ENCODE measurements at regions of chr11 and their contacts with region 1.

Region 1: DNA sequence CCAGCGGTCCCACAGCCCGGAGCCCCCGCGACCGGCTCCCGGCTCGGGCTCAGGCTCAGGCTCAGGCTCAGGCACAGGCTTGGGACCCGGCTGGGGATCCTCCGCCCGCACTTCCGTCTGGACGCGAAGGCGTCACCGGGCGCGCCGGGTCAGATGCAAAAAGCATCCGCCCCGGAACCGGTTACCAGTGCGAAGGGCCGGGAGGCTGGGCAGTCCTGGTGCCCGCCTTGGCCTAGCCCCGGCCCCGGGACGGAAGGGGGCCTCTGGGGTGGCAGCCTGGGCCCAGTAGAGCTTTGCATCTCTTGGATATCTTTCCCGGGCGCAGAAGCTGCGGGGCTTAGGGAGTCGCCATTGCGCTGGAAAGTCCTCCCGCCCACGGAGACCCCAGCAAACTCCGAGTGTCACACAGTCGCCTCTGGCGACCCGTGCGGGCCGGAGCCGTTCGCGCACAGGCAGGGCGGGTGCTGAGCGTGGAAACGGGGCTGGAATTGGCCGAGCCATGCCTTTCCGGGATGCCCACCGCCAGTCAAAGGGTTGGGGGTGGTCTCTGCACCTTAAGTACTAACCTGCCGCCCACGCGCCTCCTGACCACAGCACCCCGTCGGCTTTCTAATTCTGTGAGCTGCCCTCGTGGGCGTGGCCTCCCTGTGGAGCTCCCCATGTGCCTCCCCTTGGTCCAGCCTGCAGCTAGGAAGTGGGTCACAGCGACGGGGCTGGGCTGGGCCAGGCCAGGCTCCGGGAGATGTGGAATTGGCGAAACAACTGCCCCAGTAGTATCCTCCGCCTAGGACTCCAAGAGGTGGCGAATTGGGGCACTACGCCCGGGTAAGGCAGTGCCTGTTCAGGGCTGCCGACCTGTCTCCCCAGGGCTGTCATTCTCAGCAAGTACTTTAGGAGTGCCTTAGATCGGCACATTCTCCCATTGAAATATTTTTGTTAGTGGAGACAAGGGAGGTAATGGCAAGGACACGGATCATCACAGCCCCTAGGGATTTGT is at the start of gene TMEM9B:
- DNase-seq: peak; percentile 48 to 89 (median 75)
- ATAC-seq: peak; percentile 72
- H3K4me3 ChIP-seq: peak within 1 kb of the TSS; percentile 93 to 98
- H3K4me3 Mint-ChIP-seq: peak within 1 kb of the TSS; percentile 98
- H3K27ac ChIP-seq: peak within 1 kb of the TSS; percentile 94 to 99
- H3K27ac Mint-ChIP-seq: peak within 1 kb of the TSS; percentile 98
- H3K4me1 ChIP-seq: peaks cover 24% of the 10 kb centered on the region
- H3K4me1 Mint-ChIP-seq: peaks cover 36% of the 10 kb centered on the region
- H3K27me3 ChIP-seq: no peaks in the 10 kb centered on the region
- H3K27me3 Mint-ChIP-seq: no peaks in the 10 kb centered on the region
- CTCF ChIP-seq: no peak
- total RNA-seq, gene TMEM9B: 27.5 to 28.5 TPM

Region 2: GRCh38 chr11:8225589-8226036 is 739.0 kb before region 1 on chr11:
- CTCF ChIA-PET with region 1: no interaction called
- POLR2A ChIA-PET with region 1: no interaction called
- intact Hi-C with region 1: loop called in 1 of 2 experiments (anchors 5 kb)
- DNase-seq: peak; percentile 28 to 77 (median 66)
- ATAC-seq: peak; percentile 44
- H3K4me3 ChIP-seq: no peak overlapping the region
- H3K4me3 Mint-ChIP-seq: no peak overlapping the region
- H3K27ac ChIP-seq: no peak overlapping the region
- H3K27ac Mint-ChIP-seq: no peak overlapping the region
- H3K4me1 ChIP-seq: no peaks in the 10 kb centered on the region
- H3K4me1 Mint-ChIP-seq: peaks cover 2% of the 10 kb centered on the region
- H3K27me3 ChIP-seq: no peaks in the 10 kb centered on the region
- H3K27me3 Mint-ChIP-seq: peaks cover 5% of the 10 kb centered on the region
- CTCF ChIP-seq: peak; percentile 76

Region 3: DNA sequence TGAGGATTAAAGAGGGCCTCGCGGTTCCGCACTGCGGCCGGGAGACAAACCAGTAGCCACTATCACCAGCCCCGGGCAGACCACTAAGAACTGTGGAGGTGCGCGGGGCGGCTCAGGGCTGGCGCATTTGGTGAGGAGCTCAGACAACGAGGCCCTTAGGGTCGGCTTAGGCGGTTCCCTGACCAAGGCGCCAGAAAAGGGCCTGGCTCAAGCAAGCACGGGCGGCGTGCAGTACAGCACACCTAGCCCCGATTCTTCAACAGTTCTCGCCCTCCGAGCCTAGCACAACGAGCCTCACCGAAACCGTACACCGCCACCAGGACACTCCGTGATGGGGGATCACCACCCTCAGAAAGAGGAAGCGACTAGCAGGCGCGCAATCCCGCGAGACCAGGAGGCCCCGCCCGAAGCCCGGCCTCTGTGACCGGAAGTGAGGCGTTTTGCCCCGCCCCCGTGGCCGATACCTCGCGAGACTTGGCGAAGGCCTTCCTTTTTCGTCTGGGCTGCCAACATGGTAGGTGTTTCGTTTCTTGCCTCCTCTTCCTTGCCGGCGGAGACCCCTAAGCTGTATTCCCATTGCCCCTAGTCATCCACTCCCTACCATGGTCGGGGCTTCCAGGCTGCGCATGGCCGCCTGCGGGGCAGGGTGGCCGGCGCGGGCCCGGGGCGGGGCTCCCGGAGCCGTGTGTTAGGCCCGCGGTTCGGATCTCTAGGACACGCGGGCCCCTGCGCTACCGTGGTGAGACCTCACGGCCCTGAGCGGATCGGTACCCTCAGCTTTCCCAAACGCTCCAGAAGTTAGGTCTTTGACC is 282.1 kb before region 1 on chr11 and contains the starts of genes RPL27A and TRIM66:
- CTCF ChIA-PET with region 1: no interaction called
- POLR2A ChIA-PET with region 1: interaction called, 8 read pairs
- intact Hi-C with region 1: loop called in 1 of 2 experiments (anchors 1 kb)
- DNase-seq: peak; percentile 98 to 100 (median 99)
- ATAC-seq: peak; percentile 92
- H3K4me3 ChIP-seq: peak within 1 kb of the TSS; percentile 63 to 99
- H3K4me3 Mint-ChIP-seq: peak within 1 kb of the TSS; percentile 96
- H3K27ac ChIP-seq: peak within 1 kb of the TSS; percentile 82 to 92
- H3K27ac Mint-ChIP-seq: peak within 1 kb of the TSS; percentile 98
- H3K4me1 ChIP-seq: peaks cover 27% of the 10 kb centered on the region
- H3K4me1 Mint-ChIP-seq: peaks cover 48% of the 10 kb centered on the region
- H3K27me3 ChIP-seq: no peaks in the 10 kb centered on the region
- H3K27me3 Mint-ChIP-seq: no peaks in the 10 kb centered on the region
- CTCF ChIP-seq: no peak
- total RNA-seq, gene RPL27A: 1,595 to 1,676 TPM
- total RNA-seq, gene TRIM66: 8.6 to 9.1 TPM

Region 4: DNA sequence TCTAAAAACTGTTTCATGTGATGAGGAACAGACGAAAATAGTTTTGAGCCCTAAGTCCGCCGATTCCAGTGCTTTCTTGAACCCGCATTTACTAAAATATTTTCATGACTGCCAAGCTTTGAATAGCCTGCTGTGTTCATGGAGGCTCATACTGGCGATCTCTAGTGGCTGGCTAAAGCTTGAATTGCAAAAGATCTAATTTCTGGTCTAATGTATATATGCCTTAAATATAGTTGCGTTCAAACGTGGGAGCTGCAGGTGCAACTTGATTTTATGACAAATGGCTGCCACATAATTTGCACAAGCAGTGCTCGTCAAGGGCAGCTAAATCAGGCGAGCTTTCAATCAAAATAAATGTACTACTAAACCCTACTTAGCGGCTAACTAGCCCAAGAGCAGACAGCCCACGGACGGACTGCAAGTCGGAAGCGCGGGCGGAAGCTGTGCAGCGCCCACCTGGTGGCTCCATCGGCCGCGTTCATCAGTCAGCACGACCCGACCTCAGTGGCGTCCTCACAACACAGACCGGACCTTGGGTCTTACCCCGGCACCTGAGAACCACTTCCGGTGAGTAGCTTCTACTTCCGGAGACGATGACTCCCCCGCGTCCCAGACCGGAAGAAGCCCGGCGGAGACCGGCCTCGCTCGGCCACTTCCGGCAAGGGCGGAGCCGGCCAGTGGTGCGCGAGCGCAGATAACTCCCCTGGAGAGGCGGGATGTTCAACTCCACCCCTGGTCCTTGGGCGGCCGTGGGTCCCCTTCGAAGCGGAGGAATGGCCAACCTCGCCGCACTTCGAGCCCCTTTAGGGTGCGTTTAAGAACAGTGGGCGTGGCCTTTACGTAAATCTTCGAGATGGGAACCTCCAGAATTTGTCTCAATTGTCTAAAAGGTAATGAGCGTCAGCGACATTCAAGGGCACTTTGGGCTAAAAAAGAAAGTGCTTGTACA is 275.9 kb before region 1 on chr11:
- CTCF ChIA-PET with region 1: interaction called, 3 read pairs
- POLR2A ChIA-PET with region 1: interaction called, 6 read pairs
- intact Hi-C with region 1: loop called (anchors 1 to 2 kb)
- DNase-seq: peak; percentile 51 to 90 (median 80)
- ATAC-seq: peak; percentile 78
- H3K4me3 ChIP-seq: peak overlapping the region; percentile 78 to 79
- H3K4me3 Mint-ChIP-seq: peak overlapping the region; percentile 93
- H3K27ac ChIP-seq: peak overlapping the region; percentile 71 to 83
- H3K27ac Mint-ChIP-seq: peak overlapping the region; percentile 93
- H3K4me1 ChIP-seq: peaks cover 29% of the 10 kb centered on the region
- H3K4me1 Mint-ChIP-seq: peaks cover 41% of the 10 kb centered on the region
- H3K27me3 ChIP-seq: no peaks in the 10 kb centered on the region
- H3K27me3 Mint-ChIP-seq: no peaks in the 10 kb centered on the region
- CTCF ChIP-seq: no peak

Region 5: DNA sequence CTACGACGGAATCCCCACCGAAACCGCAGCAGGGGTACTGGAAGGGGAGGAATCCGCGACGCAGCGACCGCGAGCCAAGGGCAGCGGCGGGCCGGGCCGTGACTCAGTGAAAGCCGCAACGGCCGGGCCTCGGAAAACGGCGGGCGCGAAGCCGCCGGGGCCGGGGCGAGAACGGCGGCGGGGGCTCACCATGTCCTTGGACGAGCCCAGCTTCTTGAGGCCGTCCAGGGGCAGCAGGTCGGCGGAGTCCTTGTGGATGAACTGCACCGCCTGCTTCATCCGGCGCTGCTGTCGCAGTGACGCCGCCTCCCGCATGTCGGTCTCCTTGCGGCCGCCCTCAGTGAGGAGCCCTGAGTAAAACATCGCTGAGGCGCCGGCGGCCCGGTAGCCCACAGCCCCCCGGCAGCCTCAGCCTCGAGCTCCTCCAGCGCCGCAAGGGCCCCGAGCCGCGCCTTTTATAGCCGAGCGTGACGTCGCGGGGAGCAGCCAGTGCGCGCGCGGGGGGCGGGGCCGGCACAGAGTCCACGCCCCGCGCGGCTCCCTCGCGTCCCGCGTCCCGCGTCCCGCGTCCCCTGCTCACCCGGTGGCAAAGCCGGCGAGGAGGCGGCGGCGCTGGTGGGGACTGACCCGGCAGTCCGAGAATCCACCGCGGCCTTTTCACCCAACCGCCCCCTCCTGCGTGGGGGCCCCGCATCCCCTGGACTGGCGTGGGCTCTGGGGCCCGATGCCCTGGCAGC is 39.1 kb after region 1 on chr11 and contains the start of gene NRIP3:
- CTCF ChIA-PET with region 1: no interaction called
- POLR2A ChIA-PET with region 1: no interaction called
- intact Hi-C with region 1: loop called (anchors 1 to 2 kb)
- DNase-seq: peak; percentile 58 to 91 (median 82)
- ATAC-seq: peak; percentile 92
- H3K4me3 ChIP-seq: peak within 1 kb of the TSS; percentile 47 to 66
- H3K4me3 Mint-ChIP-seq: peak within 1 kb of the TSS; percentile 76
- H3K27ac ChIP-seq: no peak within 1 kb of the TSS
- H3K27ac Mint-ChIP-seq: peak within 1 kb of the TSS; percentile 24
- H3K4me1 ChIP-seq: peaks cover 10% of the 10 kb centered on the region
- H3K4me1 Mint-ChIP-seq: peaks cover 15% of the 10 kb centered on the region
- H3K27me3 ChIP-seq: peaks cover 7 to 24% of the 10 kb centered on the region in 2 experiments
- H3K27me3 Mint-ChIP-seq: peaks cover 32% of the 10 kb centered on the region
- CTCF ChIP-seq: no peak
- total RNA-seq, gene NRIP3: 8.8 to 10.1 TPM

Region 6: DNA sequence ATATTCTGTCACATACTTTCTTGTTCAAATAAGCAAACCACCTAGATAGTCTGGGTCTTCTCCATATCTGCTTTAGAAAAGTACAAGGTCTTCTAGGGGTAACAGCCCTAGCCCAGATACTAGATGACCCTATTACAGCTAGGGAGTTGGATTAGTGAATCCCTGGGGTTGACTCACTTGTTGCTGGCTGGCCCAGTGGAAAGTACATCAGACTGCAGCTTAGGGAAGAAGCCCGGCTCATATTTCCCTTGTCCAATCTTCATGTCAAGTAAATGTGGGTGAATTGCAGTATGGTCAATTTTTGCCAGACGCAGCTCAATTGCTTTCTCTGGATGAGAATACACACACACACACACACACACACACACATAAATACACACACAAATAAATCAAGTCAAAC is 205.8 kb after region 1 on chr11:
- CTCF ChIA-PET with region 1: no interaction called
- POLR2A ChIA-PET with region 1: no interaction called
- intact Hi-C with region 1: no loop called
- DNase-seq: no peak
- ATAC-seq: no peak
- H3K4me3 ChIP-seq: no peak overlapping the region
- H3K4me3 Mint-ChIP-seq: no peak overlapping the region
- H3K27ac ChIP-seq: no peak overlapping the region
- H3K27ac Mint-ChIP-seq: no peak overlapping the region
- H3K4me1 ChIP-seq: no peaks in the 10 kb centered on the region
- H3K4me1 Mint-ChIP-seq: peaks cover 5% of the 10 kb centered on the region
- H3K27me3 ChIP-seq: no peaks in the 10 kb centered on the region
- H3K27me3 Mint-ChIP-seq: no peaks in the 10 kb centered on the region
- CTCF ChIP-seq: no peak

Measured in CD8-positive, alpha-beta T cell (primary cell).